HEK293 (cell line): ENCODE measurements at regions of chr10 and their contacts with region 1.

Region 1: GRCh38 chr10:102776779-102777456 is 33.2 kb downstream of the WBP1L start:
- H3K4me3 ChIP-seq: no peak overlapping the region
- H3K27ac ChIP-seq: peak overlapping the region; percentile 2; the same call in 1 of the 2 replicates
- H3K4me1 ChIP-seq: peaks cover 17% of the 10 kb centered on the region
- CTCF ChIP-seq: no peak

Region 2: DNA sequence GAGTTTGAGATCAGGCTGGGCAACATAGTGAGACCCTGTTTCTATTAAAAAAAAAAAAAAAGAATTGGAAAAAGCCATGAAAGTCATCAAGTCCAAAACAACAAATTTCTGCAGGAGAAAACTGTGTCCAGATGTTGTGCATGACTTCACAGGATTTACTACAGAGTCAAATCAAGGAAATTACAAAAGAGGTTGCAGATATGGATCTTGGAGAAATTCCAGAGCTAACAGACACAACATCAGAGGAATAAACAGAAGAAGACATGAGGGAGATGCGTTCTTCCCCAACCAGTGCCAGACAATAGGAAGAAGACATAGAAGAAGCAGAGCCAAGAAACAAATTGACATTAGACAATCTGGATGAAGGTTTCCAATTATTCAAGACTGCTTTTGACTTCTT is 909.0 kb before region 1 on chr10:
- CTCF ChIA-PET with region 1: no interaction called
- POLR2A ChIA-PET with region 1: no interaction called
- H3K4me3 ChIP-seq: no peak overlapping the region
- H3K27ac ChIP-seq: no peak overlapping the region
- H3K4me1 ChIP-seq: no peaks in the 10 kb centered on the region
- CTCF ChIP-seq: no peak

Region 3: GRCh38 chr10:102231357-102232318 is 545.3 kb before region 1 on chr10:
- CTCF ChIA-PET with region 1: no interaction called
- POLR2A ChIA-PET with region 1: interaction called, 11 read pairs
- H3K4me3 ChIP-seq: peak overlapping the region; percentile 53
- H3K27ac ChIP-seq: peak overlapping the region; percentile 77; the same call in 1 of the 2 replicates
- H3K4me1 ChIP-seq: no peaks in the 10 kb centered on the region
- CTCF ChIP-seq: peak; percentile 98

Region 4: DNA sequence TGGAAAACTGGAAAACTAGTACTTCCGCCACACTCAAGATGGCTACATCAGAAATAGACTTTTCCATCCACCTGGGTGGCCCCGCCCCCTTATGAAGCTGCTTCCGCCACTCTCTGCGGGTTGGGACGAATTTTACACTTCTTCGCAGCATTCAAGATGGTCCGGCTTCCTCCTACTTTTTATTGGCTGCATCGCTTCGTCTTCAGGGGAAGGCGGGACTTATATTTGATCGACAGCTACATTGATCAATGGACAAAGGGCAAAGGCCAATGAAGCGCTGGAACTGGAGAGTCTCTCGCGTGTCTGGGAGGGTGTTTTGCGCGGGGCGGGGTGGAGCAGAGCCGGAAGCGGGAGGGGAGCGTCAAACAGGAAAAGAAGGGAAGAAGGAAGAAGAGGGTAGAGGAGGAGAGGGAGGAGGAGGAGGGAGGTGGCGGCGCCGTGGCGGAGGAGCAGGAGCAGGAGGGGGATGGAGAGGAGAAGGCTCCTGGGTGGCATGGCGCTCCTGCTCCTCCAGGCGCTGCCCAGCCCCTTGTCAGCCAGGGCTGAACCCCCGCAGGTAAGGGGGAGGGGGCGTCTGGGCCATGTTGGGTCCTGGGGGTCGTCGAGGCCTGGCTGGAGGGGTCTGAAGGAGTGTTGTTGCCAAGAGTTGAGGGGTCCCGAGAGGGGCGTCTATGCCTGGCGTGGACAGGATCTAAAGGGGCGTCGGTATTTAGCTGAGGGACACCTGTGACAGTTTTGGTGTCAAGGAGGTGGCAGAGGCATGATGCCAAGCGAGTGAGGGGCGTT is 33.1 kb before region 1 on chr10 and contains the start of gene WBP1L:
- CTCF ChIA-PET with region 1: interaction called, 3 read pairs
- POLR2A ChIA-PET with region 1: interaction called, 14 read pairs
- H3K4me3 ChIP-seq: peak within 1 kb of the TSS; percentile 66
- H3K27ac ChIP-seq: peak within 1 kb of the TSS; percentile 59
- H3K4me1 ChIP-seq: no peaks in the 10 kb centered on the region
- CTCF ChIP-seq: 0 out of 2 replicates have a peak, but pooled peaks have one; percentile 32

Region 5: GRCh38 chr10:102904346-102904745 is 127.4 kb after region 1 on chr10:
- CTCF ChIA-PET with region 1: no interaction called
- POLR2A ChIA-PET with region 1: no interaction called
- H3K4me3 ChIP-seq: no peak overlapping the region
- H3K27ac ChIP-seq: no peak overlapping the region
- H3K4me1 ChIP-seq: no peaks in the 10 kb centered on the region
- CTCF ChIP-seq: no peak